ENCODE measurements at regions of chr7 and their contacts with region 1.

Region 1: GRCh38 chr7:26052721-26053120 is 99.3 kb upstream of the NFE2L3 start:
- DNase-seq: no peak

Region 2: GRCh38 chr7:25894902-25895791 is 157.6 kb before region 1 on chr7:
- in situ Hi-C with region 1: loop called (anchors 10 kb)
- DNase-seq: peak; percentile 60

Region 3: DNA sequence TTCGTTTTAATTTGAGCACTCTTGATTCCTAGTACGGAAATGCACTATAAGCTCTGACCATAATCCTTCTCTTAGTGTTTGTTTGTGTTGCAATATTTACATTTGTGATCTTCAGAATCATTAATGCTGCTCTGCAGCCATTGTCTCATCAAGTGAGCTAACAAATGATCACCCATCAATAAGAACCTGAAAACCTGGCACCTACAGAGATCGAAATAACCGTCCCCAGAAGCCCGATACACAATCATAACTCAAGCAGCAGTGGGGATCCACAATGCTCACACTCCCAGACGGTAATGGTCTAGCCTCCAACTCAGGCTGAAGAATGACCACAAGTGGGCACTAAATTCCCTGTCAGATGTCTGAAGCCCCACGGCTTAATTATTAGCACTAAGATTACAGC is 56.7 kb before region 1 on chr7:
- in situ Hi-C with region 1: loop called (anchors 10 kb)
- DNase-seq: peak; percentile 2

Region 4: GRCh38 chr7:26011039-26011696 is 41.6 kb before region 1 on chr7:
- in situ Hi-C with region 1: loop called (anchors 5 kb)
- DNase-seq: no peak

Region 5: DNA sequence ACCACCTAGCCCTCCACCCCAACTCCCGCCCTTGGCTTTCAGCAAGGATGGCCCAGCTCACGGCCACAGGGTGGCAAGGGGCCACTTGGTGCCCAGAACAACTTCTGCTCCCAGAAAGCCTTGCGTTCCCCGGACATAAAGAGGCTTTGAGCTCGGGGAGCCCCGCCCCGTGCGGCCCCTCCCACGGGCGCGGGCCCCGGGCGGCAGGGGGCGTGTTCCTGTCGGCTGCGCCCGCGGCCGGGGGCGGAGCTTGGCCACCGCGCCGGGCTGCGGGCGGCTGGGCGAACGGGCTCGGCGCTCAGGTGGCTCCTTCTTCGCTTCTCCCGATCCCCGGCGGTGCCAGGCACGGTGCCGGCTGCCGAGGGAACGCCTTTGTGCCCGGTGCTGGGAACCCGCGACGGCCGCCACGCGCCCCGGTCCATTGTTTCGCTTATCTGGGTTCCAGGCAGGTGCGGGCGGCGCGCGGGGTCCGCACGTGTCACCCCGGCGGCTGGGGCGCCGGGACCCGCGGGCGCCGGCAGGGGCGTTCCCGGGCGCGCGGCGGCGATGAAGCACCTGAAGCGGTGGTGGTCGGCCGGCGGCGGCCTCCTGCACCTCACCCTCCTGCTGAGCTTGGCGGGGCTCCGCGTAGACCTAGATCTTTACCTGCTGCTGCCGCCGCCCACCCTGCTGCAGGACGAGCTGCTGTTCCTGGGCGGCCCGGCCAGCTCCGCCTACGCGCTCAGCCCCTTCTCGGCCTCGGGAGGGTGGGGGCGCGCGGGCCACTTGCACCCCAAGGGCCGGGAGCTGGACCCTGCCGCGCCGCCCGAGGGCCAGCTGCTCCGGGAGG is 99.4 kb after region 1 on chr7 and contains the start of gene NFE2L3:
- in situ Hi-C with region 1: no loop called
- DNase-seq: peak; percentile 68
- total RNA-seq, gene NFE2L3: 211 and 236 TPM in 2 replicates

Measured in G401 (cell line).